ENCODE measurements at regions of chr2 and their contacts with region 1.

Region 1: DNA sequence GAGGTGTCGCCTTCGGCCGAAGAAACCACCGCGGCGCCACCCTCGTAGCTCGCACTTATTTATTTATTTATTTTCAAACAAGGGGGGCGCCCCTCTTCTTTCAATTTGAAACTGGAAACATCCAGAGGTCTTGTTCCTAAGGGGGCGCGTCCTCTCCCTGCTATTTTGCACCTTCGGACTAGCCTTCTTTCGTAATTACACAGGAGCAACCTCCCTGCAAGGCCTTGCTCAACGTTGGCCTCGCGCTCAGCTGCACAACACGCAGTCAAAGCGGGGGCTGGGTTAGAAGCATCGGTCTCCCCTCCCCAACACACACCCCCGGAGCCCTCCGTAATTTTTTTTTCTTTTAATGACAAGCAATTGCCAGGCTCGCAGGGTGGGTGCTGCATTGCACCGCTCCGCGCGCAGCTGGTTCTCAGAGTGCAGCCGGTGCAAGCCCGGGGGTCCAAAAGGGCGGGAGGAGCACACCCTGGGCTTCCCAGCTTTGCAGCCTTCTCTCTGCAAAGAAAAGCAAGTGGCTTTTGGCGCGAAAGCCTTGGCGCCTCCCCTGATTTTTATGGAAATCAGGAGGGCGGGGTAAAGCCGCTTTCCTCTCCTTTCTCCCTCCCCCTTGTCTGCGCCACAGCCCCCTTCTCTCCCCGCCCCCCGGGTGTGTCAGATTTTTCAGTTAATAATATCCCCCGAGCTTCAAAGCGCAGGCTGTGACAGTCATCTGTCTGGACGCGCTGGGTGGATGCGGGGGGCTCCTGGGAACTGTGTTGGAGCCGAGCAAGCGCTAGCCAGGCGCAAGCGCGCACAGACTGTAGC is at the start of gene MYCN:
- DNase-seq: peak; percentile 88
- total RNA-seq, gene MYCN: 0.88 to 1.1 TPM

Region 2: GRCh38 chr2:15968280-15969178 is 28.5 kb after region 1 on chr2:
- intact Hi-C with region 1: no loop called
- DNase-seq: no peak

Region 3: GRCh38 chr2:15984368-15985255 is 44.6 kb after region 1 on chr2:
- intact Hi-C with region 1: loop called in 1 of 2 experiments (anchors 1 kb)
- DNase-seq: no peak

Measured in posterior vena cava (tissue), 2 donors.